IMR-90 (cell line): ENCODE measurements at regions of chrX and their contacts with region 1.

Region 1: GRCh38 chrX:54044126-54044876 is at the start of gene PHF8:
- DNase-seq: peak; percentile 92
- ATAC-seq: peak; percentile 88
- H3K4me3 ChIP-seq: peak within 1 kb of the TSS; percentile 100
- H3K27ac ChIP-seq: peak within 1 kb of the TSS; percentile 91
- H3K4me1 ChIP-seq: no peaks in the 10 kb centered on the region; the same call in 1 of the 2 replicates
- H3K27me3 ChIP-seq: no peaks in the 10 kb centered on the region
- CTCF ChIP-seq: no peak
- POLR2A ChIP-seq: peak; percentile 77
- RAD21 ChIP-seq: no peak
- total RNA-seq, gene PHF8: 11.4 and 15.2 TPM in 2 replicates

Region 2: DNA sequence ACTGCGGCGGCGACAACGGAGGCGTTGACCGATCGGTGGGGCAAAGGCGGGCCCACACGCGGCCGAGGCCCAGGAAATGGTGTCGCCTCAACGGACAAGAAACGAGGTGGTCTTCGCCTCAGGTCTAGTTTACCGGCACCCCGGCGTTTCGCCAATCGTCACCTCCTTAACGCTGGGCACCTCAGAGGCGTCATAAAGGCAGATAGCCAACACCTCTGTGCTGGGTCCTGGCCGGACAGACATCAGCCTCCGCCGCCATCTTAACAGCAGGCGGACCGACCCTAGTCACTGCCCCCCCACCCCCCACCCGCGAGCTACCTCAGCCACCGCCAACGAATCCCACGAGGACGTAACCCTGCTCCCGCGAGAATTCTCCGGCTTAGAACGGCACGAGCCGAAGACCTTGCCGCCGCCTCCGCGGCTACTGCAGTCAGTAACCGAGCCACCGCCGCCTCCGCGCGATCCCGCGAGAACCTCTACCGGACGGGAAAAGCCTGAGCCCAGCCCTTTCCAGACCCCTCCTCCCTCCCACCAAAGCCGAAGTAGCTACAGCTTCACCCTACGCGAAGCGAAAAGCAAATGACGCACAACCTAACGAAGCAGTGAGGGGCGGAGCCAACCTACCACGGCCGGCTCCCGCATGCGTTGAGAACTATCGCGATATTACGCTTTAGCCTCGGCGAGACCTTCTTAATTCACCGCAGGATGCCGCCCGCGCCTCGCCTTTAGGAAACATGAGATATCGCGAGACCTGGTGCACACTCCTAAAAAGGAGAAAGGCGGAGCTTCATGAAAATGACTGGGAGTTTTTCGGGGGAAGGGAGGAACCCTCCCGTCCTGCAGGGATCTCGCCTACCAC is 360.5 kb before region 1 on chrX:
- CTCF ChIA-PET with region 1: no interaction called
- POLR2A ChIA-PET with region 1: no interaction called
- dilution Hi-C with region 1: no loop called
- in situ Hi-C with region 1: no loop called
- intact Hi-C with region 1: loop called (anchors 2 kb)
- DNase-seq: peak; percentile 98
- ATAC-seq: peak; percentile 76
- H3K4me3 ChIP-seq: peak overlapping the region; percentile 88
- H3K27ac ChIP-seq: peak overlapping the region; percentile 97
- H3K4me1 ChIP-seq: no peaks in the 10 kb centered on the region
- H3K27me3 ChIP-seq: no peaks in the 10 kb centered on the region
- CTCF ChIP-seq: 0 out of 2 replicates have a peak, but pooled peaks have one; percentile 13
- POLR2A ChIP-seq: peak; percentile 94
- RAD21 ChIP-seq: no peak

Region 3: DNA sequence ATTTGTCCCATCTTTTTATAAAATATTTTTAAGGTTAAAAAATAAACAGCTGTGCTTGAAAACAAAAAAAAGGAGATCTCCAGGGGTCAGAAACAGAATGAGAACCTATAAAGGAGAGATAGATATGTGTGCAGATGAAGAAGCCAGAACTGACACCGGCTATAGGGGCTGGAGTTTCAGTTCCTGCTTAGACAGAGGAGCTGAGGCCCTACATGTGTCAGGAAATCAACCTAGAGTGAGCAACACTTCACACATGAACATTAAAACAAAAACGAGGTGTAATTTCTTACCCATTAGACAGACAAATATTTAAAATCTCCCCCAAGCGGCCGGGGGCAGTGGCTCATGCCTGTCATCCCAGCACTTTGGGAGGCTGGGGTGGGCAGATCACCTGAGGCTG is 340.0 kb before region 1 on chrX:
- CTCF ChIA-PET with region 1: no interaction called
- POLR2A ChIA-PET with region 1: no interaction called
- dilution Hi-C with region 1: no loop called
- in situ Hi-C with region 1: no loop called
- intact Hi-C with region 1: no loop called
- DNase-seq: no peak
- ATAC-seq: no peak
- H3K4me3 ChIP-seq: no peak overlapping the region
- H3K27ac ChIP-seq: no peak overlapping the region
- H3K4me1 ChIP-seq: no peaks in the 10 kb centered on the region
- H3K27me3 ChIP-seq: peaks cover 4% of the 10 kb centered on the region
- CTCF ChIP-seq: no peak
- POLR2A ChIP-seq: no peak
- RAD21 ChIP-seq: no peak

Region 4: GRCh38 chrX:53984895-53985294 is 59.4 kb before region 1 on chrX:
- CTCF ChIA-PET with region 1: no interaction called
- POLR2A ChIA-PET with region 1: no interaction called
- dilution Hi-C with region 1: no loop called
- in situ Hi-C with region 1: no loop called
- intact Hi-C with region 1: no loop called
- DNase-seq: no peak
- ATAC-seq: no peak
- H3K4me3 ChIP-seq: no peak overlapping the region
- H3K27ac ChIP-seq: no peak overlapping the region
- H3K4me1 ChIP-seq: no peaks in the 10 kb centered on the region
- H3K27me3 ChIP-seq: no peaks in the 10 kb centered on the region
- CTCF ChIP-seq: no peak
- POLR2A ChIP-seq: no peak
- RAD21 ChIP-seq: no peak

Region 5: GRCh38 chrX:54357414-54358377 is 313.4 kb after region 1 on chrX and contains the start of gene WNK3:
- CTCF ChIA-PET with region 1: no interaction called
- POLR2A ChIA-PET with region 1: no interaction called
- dilution Hi-C with region 1: no loop called
- in situ Hi-C with region 1: no loop called
- intact Hi-C with region 1: no loop called
- DNase-seq: peak; percentile 57
- ATAC-seq: peak; percentile 91
- H3K4me3 ChIP-seq: peak within 1 kb of the TSS; percentile 71
- H3K27ac ChIP-seq: peak within 1 kb of the TSS; percentile 50
- H3K4me1 ChIP-seq: no peaks in the 10 kb centered on the region
- H3K27me3 ChIP-seq: peaks cover 6% of the 10 kb centered on the region; the same call in 1 of the 2 replicates
- CTCF ChIP-seq: no peak
- POLR2A ChIP-seq: no peak
- RAD21 ChIP-seq: no peak
- total RNA-seq, gene WNK3: 1.4 TPM in 2 replicates

Region 6: DNA sequence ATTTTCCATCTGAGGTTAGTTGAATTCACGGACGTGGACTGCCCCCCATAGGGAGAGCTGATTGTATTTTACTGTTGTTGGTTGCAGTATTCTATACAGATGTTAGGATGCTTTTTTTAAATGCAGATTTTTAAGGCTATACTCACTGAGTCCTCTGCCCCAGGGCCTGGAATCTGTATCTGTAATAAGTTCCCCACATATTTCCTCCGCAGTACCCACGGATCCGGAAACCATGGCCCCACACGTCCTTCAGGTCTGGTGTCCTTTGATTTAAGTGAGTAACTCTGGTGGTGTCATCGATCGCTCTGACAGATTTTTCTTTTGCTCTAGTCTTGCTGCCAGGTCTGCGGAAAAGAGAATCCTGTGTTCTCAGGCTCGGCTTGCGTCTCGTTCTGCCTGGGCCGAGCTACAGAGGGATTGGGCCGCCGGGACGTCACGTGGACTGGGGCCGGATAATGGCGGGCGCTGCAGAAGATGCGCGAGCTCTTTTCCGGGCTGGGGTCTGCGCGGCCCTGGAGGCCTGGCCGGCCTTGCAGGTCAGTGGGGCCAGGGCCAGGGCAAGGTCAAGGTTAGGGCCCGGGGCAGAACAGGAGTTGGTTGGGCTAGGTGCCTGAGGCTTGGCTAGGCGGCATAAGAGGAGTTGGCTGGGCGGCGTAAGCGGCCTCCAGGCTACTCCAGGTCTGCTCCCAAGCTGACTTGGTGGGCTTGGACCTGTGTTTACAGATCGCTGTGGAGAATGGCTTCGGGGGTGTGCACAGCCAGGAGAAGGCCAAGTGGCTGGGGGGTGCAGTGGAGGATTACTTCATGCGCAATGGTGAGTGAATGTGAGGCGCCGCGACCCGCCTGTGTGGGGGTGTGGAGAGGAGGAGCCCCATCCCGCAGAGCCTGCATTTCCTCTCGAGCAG is 395.9 kb after region 1 on chrX and contains the start of gene TSR2:
- CTCF ChIA-PET with region 1: no interaction called
- POLR2A ChIA-PET with region 1: no interaction called
- dilution Hi-C with region 1: no loop called
- in situ Hi-C with region 1: loop called (anchors 25 kb)
- intact Hi-C with region 1: loop called (anchors 1 kb)
- DNase-seq: peak; percentile 87
- ATAC-seq: peak; percentile 97
- H3K4me3 ChIP-seq: peak within 1 kb of the TSS; percentile 84
- H3K27ac ChIP-seq: peak within 1 kb of the TSS; percentile 38
- H3K4me1 ChIP-seq: no peaks in the 10 kb centered on the region
- H3K27me3 ChIP-seq: peaks cover 4% of the 10 kb centered on the region; the same call in 1 of the 2 replicates
- CTCF ChIP-seq: peak; percentile 40
- POLR2A ChIP-seq: no peak
- RAD21 ChIP-seq: peak; percentile 45
- total RNA-seq, gene TSR2: 8.8 and 14.4 TPM in 2 replicates